Activated naive CD8-positive, alpha-beta T cell treated with anti-CD3 and anti-CD28 coated beads, Interleukin-2, amount 10 ng/mL, durations not matched to agents 7 days and 5 days (primary cell): ENCODE measurements at regions of chr18 and their contacts with region 1.

Region 1: DNA sequence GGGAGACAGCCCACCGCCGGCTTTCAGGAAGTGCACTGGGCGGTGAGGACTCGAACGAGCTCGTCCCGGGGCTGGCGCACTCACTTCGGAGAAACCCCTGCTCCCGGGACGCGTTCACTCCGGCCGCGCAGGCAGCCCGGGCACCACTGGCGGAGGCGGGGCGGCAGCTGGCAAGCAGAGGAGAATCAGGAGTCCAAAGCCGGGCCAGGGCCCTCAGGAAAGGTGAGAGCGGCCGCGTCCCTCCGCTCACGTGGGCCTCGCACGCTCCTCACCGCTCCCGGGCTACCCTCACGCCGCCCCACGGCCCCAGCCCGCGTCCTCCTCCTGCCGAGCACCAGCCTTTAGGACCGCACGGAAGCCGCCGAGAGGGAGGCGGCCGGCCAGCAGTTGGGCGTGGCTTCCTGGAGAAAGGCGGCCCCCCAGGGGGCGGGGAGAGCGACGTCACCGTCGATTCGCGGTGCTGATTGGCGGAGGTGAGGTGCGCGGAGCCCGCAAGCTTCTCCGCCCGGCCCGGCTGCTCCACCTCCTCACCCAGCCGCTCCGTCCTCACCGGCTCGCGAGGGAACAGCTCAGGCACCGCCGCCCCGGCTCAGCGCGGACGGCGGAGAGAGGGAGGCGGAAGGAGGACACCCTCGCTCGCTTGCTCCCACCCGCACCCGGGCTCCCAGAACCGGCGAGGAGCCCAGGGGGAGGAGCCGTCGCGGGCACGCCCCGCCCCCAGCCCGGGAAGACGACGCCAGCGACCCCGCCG is at the start of gene ZCCHC2:
- DNase-seq: peak; percentile 100
- ATAC-seq: peak; percentile 85
- H3K4me3 Mint-ChIP-seq: peak within 1 kb of the TSS; percentile 98
- H3K27ac Mint-ChIP-seq: peak within 1 kb of the TSS; percentile 99
- H3K4me1 Mint-ChIP-seq: peaks cover 31% of the 10 kb centered on the region
- H3K27me3 Mint-ChIP-seq: no peaks in the 10 kb centered on the region
- total RNA-seq, gene ZCCHC2: 56.8 to 61.7 TPM

Region 2: GRCh38 chr18:62186774-62187542 is 335.7 kb before region 1 on chr18 and contains the starts of genes PIGN and RELCH:
- POLR2A ChIA-PET with region 1: interaction called, 14 read pairs
- DNase-seq: peak; percentile 86
- ATAC-seq: peak; percentile 94
- H3K4me3 Mint-ChIP-seq: peak within 1 kb of the TSS; percentile 95
- H3K27ac Mint-ChIP-seq: peak within 1 kb of the TSS; percentile 97
- H3K4me1 Mint-ChIP-seq: peaks cover 38% of the 10 kb centered on the region
- H3K27me3 Mint-ChIP-seq: no peaks in the 10 kb centered on the region
- total RNA-seq, gene PIGN: 25.0 to 28.2 TPM
- total RNA-seq, gene RELCH: 42.9 to 46.3 TPM

Region 3: GRCh38 chr18:62420513-62421209 is 102.0 kb before region 1 on chr18:
- POLR2A ChIA-PET with region 1: interaction called, 29 read pairs
- DNase-seq: peak; percentile 51
- ATAC-seq: peak; percentile 97
- H3K4me3 Mint-ChIP-seq: peak overlapping the region; percentile 76
- H3K27ac Mint-ChIP-seq: peak overlapping the region; percentile 93
- H3K4me1 Mint-ChIP-seq: peaks cover 56% of the 10 kb centered on the region
- H3K27me3 Mint-ChIP-seq: no peaks in the 10 kb centered on the region

Region 4: GRCh38 chr18:62505669-62506494 is 16.8 kb before region 1 on chr18:
- POLR2A ChIA-PET with region 1: interaction called, 165 read pairs
- DNase-seq: peak; percentile 65
- ATAC-seq: peak; percentile 89
- H3K4me3 Mint-ChIP-seq: peak overlapping the region; percentile 76
- H3K27ac Mint-ChIP-seq: peak overlapping the region; percentile 100
- H3K4me1 Mint-ChIP-seq: peaks cover 27% of the 10 kb centered on the region
- H3K27me3 Mint-ChIP-seq: no peaks in the 10 kb centered on the region